ENCODE measurements at regions of chr3 and their contacts with region 1.

Region 1: GRCh38 chr3:179015551-179016020 is 56.0 kb downstream of the ZMAT3 start:
- DNase-seq: peak; percentile 85
- ATAC-seq: peak; percentile 87
- H3K4me3 Mint-ChIP-seq: no peak overlapping the region
- H3K27ac Mint-ChIP-seq: peak overlapping the region; percentile 41
- H3K4me1 Mint-ChIP-seq: peaks cover 32% of the 10 kb centered on the region
- H3K27me3 Mint-ChIP-seq: peaks cover 9% of the 10 kb centered on the region

Region 2: GRCh38 chr3:179027326-179027900 is 11.8 kb after region 1 on chr3:
- CTCF ChIA-PET with region 1: interaction called, 10 read pairs
- POLR2A ChIA-PET with region 1: no interaction called
- DNase-seq: no peak
- ATAC-seq: peak; percentile 42
- H3K4me3 Mint-ChIP-seq: no peak overlapping the region
- H3K27ac Mint-ChIP-seq: peak overlapping the region; percentile 74
- H3K4me1 Mint-ChIP-seq: peaks cover 19% of the 10 kb centered on the region
- H3K27me3 Mint-ChIP-seq: no peaks in the 10 kb centered on the region

Region 3: GRCh38 chr3:179071550-179072397 is 56.2 kb after region 1 on chr3 and contains the start of gene ZMAT3:
- CTCF ChIA-PET with region 1: interaction called, 30 read pairs
- POLR2A ChIA-PET with region 1: no interaction called
- DNase-seq: peak; percentile 87
- ATAC-seq: peak; percentile 89
- H3K4me3 Mint-ChIP-seq: peak within 1 kb of the TSS; percentile 96
- H3K27ac Mint-ChIP-seq: peak within 1 kb of the TSS; percentile 90
- H3K4me1 Mint-ChIP-seq: peaks cover 50% of the 10 kb centered on the region
- H3K27me3 Mint-ChIP-seq: no peaks in the 10 kb centered on the region
- total RNA-seq, gene ZMAT3: 15.9 to 17.1 TPM

Region 4: GRCh38 chr3:179105881-179106280 is 90.3 kb after region 1 on chr3:
- CTCF ChIA-PET with region 1: interaction called, 11 read pairs
- POLR2A ChIA-PET with region 1: no interaction called
- DNase-seq: no peak
- ATAC-seq: no peak
- H3K4me3 Mint-ChIP-seq: no peak overlapping the region
- H3K27ac Mint-ChIP-seq: no peak overlapping the region
- H3K4me1 Mint-ChIP-seq: peaks cover 7% of the 10 kb centered on the region
- H3K27me3 Mint-ChIP-seq: peaks cover 12% of the 10 kb centered on the region

Region 5: DNA sequence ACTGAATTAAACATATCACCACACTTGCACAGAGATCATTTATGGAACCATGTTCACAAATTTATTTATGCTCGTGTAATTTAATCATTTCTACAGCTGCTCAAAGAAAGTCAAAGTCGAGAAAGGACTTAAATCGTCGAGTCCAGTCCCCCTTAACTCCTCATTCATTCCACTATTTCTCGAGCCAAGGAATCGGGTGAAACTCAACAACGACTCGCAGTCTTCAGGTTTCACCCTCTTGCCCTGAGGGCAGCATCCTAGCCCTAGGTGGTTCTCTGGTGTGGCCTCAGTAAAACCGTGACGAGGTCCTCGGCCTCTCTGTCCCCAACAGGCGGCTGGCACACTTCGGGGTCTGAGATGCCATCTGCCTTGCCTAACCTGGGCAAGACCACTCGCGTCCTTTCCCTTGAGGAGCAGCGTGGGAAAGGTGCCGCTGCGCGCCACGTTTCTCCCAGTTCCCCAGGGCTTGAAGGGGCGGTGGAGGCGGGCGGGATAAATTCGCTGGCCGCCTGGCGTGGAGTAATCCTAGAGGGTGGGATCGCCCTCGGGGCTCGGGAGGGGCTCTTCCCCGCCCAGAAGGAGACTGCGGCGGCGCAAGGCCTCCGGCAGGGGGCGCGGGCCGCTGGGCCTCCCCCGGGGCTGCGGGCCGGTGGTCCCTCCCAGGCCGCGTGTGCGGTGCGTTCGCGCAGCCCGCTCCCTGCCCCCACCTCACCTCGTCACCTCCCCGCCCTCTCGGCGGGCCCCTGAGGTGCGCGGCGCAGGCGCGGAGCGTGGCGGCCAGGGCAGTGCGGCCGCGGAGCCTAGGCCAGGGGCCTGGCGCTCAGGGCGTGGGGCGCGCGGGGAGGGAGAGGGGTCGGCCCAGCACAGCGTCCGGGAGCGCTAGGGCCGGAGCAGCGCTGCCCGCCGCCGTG is 307.0 kb after region 1 on chr3 and contains the start of gene ZNF639:
- CTCF ChIA-PET with region 1: interaction called, 15 read pairs
- POLR2A ChIA-PET with region 1: no interaction called
- DNase-seq: peak; percentile 86
- ATAC-seq: peak; percentile 86
- H3K4me3 Mint-ChIP-seq: peak within 1 kb of the TSS; percentile 92
- H3K27ac Mint-ChIP-seq: peak within 1 kb of the TSS; percentile 94
- H3K4me1 Mint-ChIP-seq: peaks cover 32% of the 10 kb centered on the region
- H3K27me3 Mint-ChIP-seq: peaks cover 2% of the 10 kb centered on the region
- total RNA-seq, gene ZNF639: 36.3 to 40.6 TPM

Measured in activated CD8-positive, alpha-beta T cell treated with anti-CD3 and anti-CD28 coated beads, Interleukin-2, amount 10 ng/mL, durations not matched to agents 7 days and 5 days (primary cell).